ENCODE measurements at regions of chr6 and their contacts with region 1.

Region 1: DNA sequence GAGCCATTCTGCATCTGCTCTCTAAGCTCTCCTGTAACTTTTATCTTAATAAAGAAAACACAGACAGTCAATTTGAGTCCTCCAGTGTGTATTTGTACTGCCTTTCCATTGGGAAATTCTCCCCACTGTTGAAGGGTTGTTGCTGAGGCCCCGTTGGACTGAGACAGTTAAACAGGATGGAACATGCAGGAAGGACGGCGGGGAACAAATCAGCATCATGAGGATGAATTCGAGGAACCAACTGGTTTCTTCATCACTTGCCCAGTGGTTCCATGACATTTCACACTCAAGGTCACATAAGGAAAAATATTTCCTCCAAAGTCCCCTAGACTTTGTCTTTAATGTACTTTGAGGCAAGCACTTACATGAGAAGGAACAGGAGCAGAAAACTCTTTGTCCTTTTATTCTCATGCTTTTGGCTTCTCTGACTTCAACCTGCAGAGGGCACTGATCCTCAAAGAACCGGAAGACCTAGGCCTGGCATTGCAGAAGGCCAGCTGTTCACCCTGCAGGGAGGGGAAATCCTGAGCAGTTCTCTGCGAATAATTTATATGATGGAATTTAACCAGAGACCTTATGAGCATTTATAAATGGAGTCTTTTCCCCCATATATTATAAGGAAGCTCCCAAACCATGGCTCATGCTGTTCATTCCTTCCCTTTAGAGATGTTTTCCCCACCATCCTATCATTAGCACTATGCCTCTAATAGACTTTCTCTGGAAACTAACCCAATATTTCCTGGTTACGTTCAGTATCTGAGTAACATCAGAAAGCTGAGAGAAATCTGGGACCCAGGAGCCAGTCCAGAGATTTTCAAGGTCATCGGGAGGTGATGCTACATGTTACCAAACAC is 55.2 kb upstream of the ADGRF1 start:
- DNase-seq: peak; percentile 78
- H3K4me3 ChIP-seq: no peak overlapping the region
- CTCF ChIP-seq: peak; percentile 83

Region 2: GRCh38 chr6:47309291-47310130 is 212.2 kb after region 1 on chr6 and contains the start of gene TNFRSF21:
- in situ Hi-C with region 1: loop called (anchors 5 kb)
- DNase-seq: peak; percentile 77
- H3K4me3 ChIP-seq: peak within 1 kb of the TSS; percentile 74
- CTCF ChIP-seq: peak; percentile 95

Measured in astrocyte of the cerebellum (primary cell).